PC-9 (cell line): ENCODE measurements at regions of chr10 and their contacts with region 1.

Region 1: GRCh38 chr10:16986406-16987205 is 143.0 kb downstream of the CUBN start:
- DNase-seq: no peak
- H3K4me3 ChIP-seq: no peak overlapping the region
- H3K27ac ChIP-seq: no peak overlapping the region
- H3K4me1 ChIP-seq: no peaks in the 10 kb centered on the region
- H3K27me3 ChIP-seq: no peaks in the 10 kb centered on the region
- CTCF ChIP-seq: no peak

Region 2: DNA sequence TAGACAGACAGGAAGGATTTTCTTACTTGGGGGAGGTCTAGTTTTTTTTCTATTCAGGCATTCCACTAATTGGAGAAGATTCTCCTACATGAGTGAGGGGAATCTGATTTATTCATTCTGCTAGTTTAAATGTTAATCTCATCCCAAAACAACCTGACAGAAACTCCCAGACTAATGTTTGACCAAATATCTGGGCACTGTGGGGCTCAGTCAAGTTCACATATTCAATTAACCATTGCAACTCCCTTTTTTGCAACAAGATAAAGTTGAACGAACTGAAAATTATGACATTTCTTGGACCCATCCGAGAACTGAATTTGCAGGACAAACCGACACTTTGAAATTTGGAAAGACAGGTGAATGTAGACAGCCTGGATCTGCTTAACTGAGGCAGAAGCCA is 744.2 kb before region 1 on chr10:
- CTCF ChIA-PET with region 1: no interaction called
- POLR2A ChIA-PET with region 1: interaction called, 16 read pairs
- intact Hi-C with region 1: no loop called
- DNase-seq: no peak
- H3K4me3 ChIP-seq: no peak overlapping the region
- H3K27ac ChIP-seq: no peak overlapping the region
- H3K4me1 ChIP-seq: no peaks in the 10 kb centered on the region
- H3K27me3 ChIP-seq: 0 out of 2 replicates have a peak, but pooled peaks cover 4% of the 10 kb centered on the region
- CTCF ChIP-seq: no peak

Region 3: GRCh38 chr10:17023386-17024298 is 37.0 kb after region 1 on chr10:
- CTCF ChIA-PET with region 1: no interaction called
- POLR2A ChIA-PET with region 1: no interaction called
- intact Hi-C with region 1: no loop called
- DNase-seq: peak; percentile 67 to 87
- H3K4me3 ChIP-seq: no peak overlapping the region
- H3K27ac ChIP-seq: no peak overlapping the region
- H3K4me1 ChIP-seq: peaks cover 11% of the 10 kb centered on the region
- H3K27me3 ChIP-seq: no peaks in the 10 kb centered on the region
- CTCF ChIP-seq: no peak